Heart left ventricle (tissue), 16 donors: ENCODE measurements at regions of chr18 and their contacts with region 1.

Region 1: DNA sequence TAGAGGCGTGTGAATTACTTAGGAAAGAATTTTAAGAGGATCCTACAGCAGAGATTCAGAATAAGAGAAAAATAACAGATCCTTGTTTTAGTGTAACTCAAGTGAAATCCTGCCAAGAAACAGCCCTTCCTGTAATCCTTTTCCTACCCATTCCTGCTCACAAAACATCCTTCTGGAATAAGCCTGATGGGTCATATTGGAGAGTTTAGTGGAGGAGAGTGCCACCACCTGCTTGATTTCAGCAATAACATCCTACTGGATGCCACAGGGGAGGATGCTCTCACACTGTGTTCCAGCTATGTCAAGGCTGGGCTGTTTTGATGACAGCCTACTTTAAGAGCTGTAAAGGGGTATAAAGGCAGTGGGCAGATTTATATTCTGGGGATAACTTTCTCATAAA is 54.8 kb upstream of the CCDC178 start:
- DNase-seq: no peak
- ATAC-seq: peak in 2 of 4 donors; percentile 34 to 36
- H3K4me3 ChIP-seq: no peak overlapping the region
- H3K27ac ChIP-seq: no peak overlapping the region
- H3K4me1 ChIP-seq: no peaks in the 10 kb centered on the region
- H3K27me3 ChIP-seq: no peaks in the 10 kb centered on the region
- CTCF ChIP-seq: peak in 6 of 12 donors; percentile 7 to 44 (median 24)
- POLR2A ChIP-seq: no peak

Region 2: GRCh38 chr18:33114749-33115148 is 380.5 kb before region 1 on chr18:
- intact Hi-C with region 1: no loop called
- DNase-seq: no peak
- ATAC-seq: no peak
- H3K4me3 ChIP-seq: no peak overlapping the region
- H3K27ac ChIP-seq: no peak overlapping the region
- H3K4me1 ChIP-seq: no peaks in the 10 kb centered on the region
- H3K27me3 ChIP-seq: no peaks in the 10 kb centered on the region
- CTCF ChIP-seq: no peak
- POLR2A ChIP-seq: no peak

Region 3: DNA sequence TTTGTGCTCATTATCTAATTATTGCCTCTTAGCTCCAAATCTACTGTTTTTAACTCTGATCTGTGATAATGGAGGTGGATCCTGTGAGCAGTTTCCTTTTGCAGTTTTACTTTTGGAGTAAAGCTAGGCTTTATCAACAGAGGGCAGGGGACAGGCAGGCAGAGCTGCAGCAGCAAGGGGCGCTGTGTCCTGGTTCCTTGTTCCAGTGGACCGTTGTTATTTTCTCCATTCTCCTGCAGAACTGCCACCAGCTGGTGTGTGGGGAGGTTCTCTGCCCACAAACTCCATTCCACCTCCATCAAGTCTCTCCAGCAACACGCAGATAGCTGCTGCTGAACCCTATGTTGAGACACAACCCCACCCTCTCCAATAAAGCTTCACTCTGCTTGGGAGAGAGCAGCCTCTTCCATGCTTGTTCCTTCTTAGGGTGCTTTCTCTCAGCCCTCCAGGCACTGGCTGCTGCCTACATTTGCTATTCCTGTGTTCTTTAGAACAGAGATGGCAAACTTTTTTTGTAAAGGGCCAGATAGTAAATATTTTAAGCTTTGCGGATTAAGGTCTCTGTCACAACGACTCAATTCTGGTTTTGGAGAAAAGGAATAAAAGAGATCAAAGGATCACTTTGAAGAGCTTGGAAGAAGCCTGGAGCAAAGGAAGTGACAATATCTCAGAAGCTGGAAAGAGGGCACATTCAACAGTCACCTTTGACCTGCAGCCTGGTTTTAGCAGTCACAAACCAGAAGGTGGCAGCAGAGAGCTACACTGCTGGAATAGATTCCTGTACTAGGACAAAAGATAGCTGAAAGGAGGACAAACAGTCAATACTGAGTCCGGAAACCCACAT is 263.6 kb before region 1 on chr18:
- intact Hi-C with region 1: loop called in 1 of 10 experiments (anchors 5 kb)
- DNase-seq: peak in 4 of 5 donors; percentile 46 to 63 (median 48)
- ATAC-seq: peak; percentile 42 to 73 (median 68)
- H3K4me3 ChIP-seq: no peak overlapping the region
- H3K27ac ChIP-seq: no peak overlapping the region
- H3K4me1 ChIP-seq: no peaks in the 10 kb centered on the region
- H3K27me3 ChIP-seq: no peaks in the 10 kb centered on the region
- CTCF ChIP-seq: peak; percentile 75 to 93 (median 83)
- POLR2A ChIP-seq: no peak

Region 4: DNA sequence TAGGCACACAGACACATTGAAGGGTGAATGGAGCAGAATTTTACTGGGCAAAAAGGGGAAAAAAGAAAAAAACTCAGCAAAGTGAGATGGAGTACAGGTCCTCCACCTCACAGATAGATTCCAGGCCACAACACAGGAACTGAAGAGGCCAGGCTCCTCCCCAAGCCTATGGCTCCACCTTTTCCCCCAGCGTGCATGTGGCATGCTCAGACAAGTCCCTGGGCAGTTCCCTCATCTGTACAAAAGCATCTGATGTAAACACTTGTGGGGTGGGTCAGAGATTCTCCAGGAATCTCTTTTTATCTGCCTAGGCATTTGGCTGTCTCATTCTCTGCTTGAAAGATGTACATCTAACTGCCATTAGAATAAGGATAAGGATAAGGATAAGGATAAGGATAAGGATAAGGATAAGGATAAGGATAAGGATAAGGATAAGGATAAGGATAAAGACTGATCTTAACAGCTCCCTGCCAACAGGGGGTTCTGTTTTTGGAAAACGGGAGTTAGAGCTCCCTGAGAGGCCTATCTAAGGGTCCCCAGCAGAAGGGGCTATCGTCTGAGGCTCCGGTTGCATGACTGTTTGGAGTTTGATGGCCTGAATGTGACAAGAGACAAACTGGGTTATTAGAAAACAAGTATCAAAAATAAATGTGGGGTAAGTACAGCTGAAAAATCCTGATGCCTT is 65.5 kb after region 1 on chr18:
- intact Hi-C with region 1: loop called in 1 of 10 experiments (anchors 10 kb)
- DNase-seq: no peak
- ATAC-seq: no peak
- H3K4me3 ChIP-seq: no peak overlapping the region
- H3K27ac ChIP-seq: no peak overlapping the region
- H3K4me1 ChIP-seq: peaks cover 0 to 3% (median 0%) of the 10 kb centered on the region in 12 donors
- H3K27me3 ChIP-seq: no peaks in the 10 kb centered on the region
- CTCF ChIP-seq: no peak
- POLR2A ChIP-seq: no peak

Region 5: GRCh38 chr18:33606621-33607020 is 111.3 kb after region 1 on chr18:
- intact Hi-C with region 1: loop called in 1 of 10 experiments (anchors 5 kb)
- DNase-seq: no peak
- ATAC-seq: no peak
- H3K4me3 ChIP-seq: no peak overlapping the region
- H3K27ac ChIP-seq: no peak overlapping the region
- H3K4me1 ChIP-seq: no peaks in the 10 kb centered on the region
- H3K27me3 ChIP-seq: no peaks in the 10 kb centered on the region
- CTCF ChIP-seq: no peak
- POLR2A ChIP-seq: no peak